Tibial artery (tissue), 4 donors: ENCODE measurements at regions of chr12 and their contacts with region 1.

Region 1: GRCh38 chr12:28108599-28108998 is 81.7 kb upstream of the CCDC91 start:
- DNase-seq: no peak
- H3K4me3 ChIP-seq: no peak overlapping the region
- H3K27ac ChIP-seq: no peak overlapping the region
- H3K4me1 ChIP-seq: no peaks in the 10 kb centered on the region
- H3K27me3 ChIP-seq: no peaks in the 10 kb centered on the region
- CTCF ChIP-seq: no peak

Region 2: DNA sequence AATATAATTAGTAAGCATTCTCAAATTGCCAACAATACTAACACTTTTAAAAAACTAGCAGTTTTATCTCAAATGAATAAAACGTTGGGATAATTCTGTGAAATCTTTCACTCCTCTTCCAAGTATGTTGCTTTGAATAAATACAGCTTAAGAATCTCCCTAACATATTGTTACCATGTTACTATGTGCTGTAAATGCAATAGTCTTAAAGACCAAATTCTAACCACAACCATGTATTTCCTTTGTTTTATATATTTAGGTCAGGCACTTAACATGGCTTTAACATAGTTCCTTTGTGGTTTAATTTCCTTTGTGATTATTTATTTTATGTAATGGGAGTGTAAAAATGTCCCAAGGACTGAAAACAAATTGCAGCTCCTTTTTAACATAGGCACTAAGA is 47.8 kb after region 1 on chr12:
- intact Hi-C with region 1: no loop called
- DNase-seq: no peak
- H3K4me3 ChIP-seq: no peak overlapping the region
- H3K27ac ChIP-seq: no peak overlapping the region
- H3K4me1 ChIP-seq: no peaks in the 10 kb centered on the region
- H3K27me3 ChIP-seq: no peaks in the 10 kb centered on the region
- CTCF ChIP-seq: no peak

Region 3: DNA sequence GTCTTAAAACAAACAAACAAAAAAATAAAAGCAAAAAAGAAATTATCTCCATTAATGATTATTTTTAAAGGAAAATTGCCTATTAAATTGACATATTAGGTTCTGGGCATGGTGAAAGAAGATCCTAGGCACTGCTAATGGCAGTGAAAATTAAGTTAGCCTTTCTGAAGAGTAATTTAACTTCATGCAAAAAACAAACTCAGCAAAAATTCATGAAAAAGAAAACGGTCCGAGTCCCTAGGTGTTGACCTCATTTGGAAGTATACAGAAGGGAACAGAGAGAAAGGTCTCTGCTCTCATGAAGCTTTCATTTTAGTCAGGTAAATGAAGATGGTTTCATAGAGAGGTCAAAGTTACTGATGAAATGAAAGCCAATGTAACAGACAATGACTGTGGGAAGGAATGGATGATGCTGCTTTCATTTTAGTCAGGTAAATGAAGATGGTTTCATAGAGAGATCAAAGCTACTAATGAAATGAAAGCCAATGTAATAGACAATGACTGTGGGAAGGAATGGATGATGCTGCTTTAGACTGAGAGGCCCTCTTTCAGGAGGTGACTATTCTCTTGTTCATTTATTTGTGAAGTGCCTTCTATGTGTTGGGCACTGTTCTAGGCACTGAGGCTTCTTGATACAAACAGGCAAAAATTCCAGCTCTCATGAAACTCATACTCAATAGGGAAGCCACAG is 1338.8 kb after region 1 on chr12:
- intact Hi-C with region 1: loop called (anchors 5 kb)
- DNase-seq: no peak
- H3K4me3 ChIP-seq: no peak overlapping the region
- H3K27ac ChIP-seq: no peak overlapping the region
- H3K4me1 ChIP-seq: no peaks in the 10 kb centered on the region
- H3K27me3 ChIP-seq: no peaks in the 10 kb centered on the region
- CTCF ChIP-seq: no peak